HEK293 (cell line): ENCODE measurements at regions of chr7 and their contacts with region 1.

Region 1: GRCh38 chr7:35553519-35553918 is 141.4 kb downstream of the HERPUD2 start:
- H3K4me3 ChIP-seq: no peak overlapping the region
- H3K27ac ChIP-seq: no peak overlapping the region
- H3K4me1 ChIP-seq: no peaks in the 10 kb centered on the region
- CTCF ChIP-seq: no peak

Region 2: GRCh38 chr7:35537067-35538023 is 16.2 kb before region 1 on chr7:
- CTCF ChIA-PET with region 1: interaction called, 10 read pairs
- POLR2A ChIA-PET with region 1: no interaction called
- H3K4me3 ChIP-seq: peak overlapping the region; percentile 43
- H3K27ac ChIP-seq: no peak overlapping the region
- H3K4me1 ChIP-seq: no peaks in the 10 kb centered on the region
- CTCF ChIP-seq: peak; percentile 87